Left ventricle myocardium inferior (tissue), 1 donor: ENCODE measurements at regions of chrX and their contacts with region 1.

Region 1: GRCh38 chrX:57821703-57822375 is 88.4 kb downstream of the ZXDA start:
- DNase-seq: no peak
- H3K4me3 ChIP-seq: peak overlapping the region; percentile 55
- H3K27ac ChIP-seq: no peak overlapping the region
- H3K4me1 ChIP-seq: no peaks in the 10 kb centered on the region
- H3K27me3 ChIP-seq: no peaks in the 10 kb centered on the region
- CTCF ChIP-seq: peak; percentile 70

Region 2: GRCh38 chrX:57871463-57871862 is 49.6 kb after region 1 on chrX:
- intact Hi-C with region 1: loop called (anchors 10 kb)
- DNase-seq: no peak
- H3K4me3 ChIP-seq: no peak overlapping the region
- H3K27ac ChIP-seq: no peak overlapping the region
- H3K4me1 ChIP-seq: peaks cover 6% of the 10 kb centered on the region
- H3K27me3 ChIP-seq: no peaks in the 10 kb centered on the region
- CTCF ChIP-seq: no peak

Region 3: DNA sequence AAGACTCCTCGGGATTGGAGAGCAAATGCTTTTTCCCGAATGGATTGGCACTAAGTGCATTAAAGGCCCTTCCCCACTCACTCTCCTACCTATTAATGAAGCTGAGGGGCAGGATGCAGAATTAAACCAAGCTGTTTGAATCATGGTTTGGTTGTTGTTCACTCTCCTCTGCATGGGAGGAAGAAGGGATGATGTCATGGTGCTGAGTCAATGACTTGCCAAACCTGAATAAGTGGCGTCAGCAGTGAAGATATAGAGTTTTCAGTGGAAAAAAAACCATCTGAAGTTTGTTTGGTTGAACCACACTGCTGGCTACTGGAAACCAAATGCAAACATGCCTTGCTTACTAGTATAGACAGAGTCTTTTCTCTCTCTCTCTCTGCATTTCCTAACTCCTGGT is 108.2 kb after region 1 on chrX:
- intact Hi-C with region 1: loop called (anchors 5 kb)
- DNase-seq: no peak
- H3K4me3 ChIP-seq: no peak overlapping the region
- H3K27ac ChIP-seq: no peak overlapping the region
- H3K4me1 ChIP-seq: no peaks in the 10 kb centered on the region
- H3K27me3 ChIP-seq: no peaks in the 10 kb centered on the region
- CTCF ChIP-seq: no peak

Region 4: DNA sequence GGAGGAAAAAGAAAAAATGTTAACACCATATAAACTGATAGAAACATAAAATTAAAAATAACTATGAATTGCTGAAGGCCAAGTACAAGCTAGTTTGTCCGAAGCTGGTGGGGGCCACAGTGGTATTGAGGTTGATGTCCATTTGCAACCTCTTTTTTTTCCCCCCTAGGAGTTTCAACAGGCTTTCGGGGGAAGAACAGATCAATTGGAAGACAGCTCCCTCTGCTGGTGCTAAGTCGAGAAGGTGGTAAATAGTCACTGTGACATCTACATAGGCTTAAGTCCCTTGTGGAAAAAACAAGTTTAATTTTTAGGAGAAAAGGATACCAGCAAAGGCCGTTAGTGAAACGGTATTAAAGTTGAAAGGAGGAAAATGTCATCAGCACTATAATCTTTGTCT is 204.1 kb after region 1 on chrX:
- intact Hi-C with region 1: loop called (anchors 10 kb)
- DNase-seq: no peak
- H3K4me3 ChIP-seq: no peak overlapping the region
- H3K27ac ChIP-seq: no peak overlapping the region
- H3K4me1 ChIP-seq: no peaks in the 10 kb centered on the region
- H3K27me3 ChIP-seq: no peaks in the 10 kb centered on the region
- CTCF ChIP-seq: peak; percentile 56